Naive thymus-derived CD4-positive, alpha-beta T cell (primary cell): ENCODE measurements at regions of chr1 and their contacts with region 1.

Region 1: DNA sequence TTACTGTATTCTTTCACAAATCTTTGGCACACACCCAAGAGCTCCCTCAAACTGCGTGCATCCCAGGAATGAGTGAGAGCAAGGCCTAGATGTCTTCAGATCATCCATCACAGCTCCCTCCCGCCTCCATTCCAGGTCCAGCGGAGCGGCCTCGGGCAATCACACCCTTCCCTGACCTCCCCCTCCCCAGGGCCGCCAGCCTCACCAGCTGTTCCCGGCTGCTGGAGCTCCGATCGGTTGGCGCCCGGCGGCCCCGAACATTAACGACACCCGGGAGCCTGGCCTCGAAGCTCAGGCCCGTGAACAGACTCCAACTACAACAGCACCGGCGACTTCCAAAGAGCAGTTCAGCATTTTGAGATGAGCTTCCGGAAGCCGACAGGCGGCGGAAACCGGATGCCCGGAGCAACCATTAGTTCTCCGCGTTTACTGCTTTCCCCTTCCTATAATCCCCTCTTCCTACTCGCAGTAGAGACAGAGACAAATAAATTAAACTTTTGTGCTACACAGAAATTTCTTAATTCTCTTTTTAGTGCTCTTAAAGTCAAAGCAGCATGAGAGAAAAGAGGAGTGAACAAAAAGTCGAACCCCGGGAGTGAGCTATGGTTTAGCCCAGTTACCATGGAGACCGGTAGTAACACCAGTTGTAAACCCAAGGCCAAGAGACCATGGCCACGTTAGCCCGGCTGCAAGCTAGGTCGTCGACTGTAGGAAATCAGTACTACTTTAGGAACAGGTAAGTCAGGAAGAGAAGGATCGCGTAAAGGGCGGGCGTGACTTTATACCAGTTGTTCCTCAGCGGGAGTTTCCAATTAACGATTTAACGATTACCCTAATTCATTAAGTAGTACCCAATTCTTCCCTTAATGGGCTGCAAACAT is at the starts of genes GPATCH2 and SPATA17:
- DNase-seq: peak; percentile 52 to 92 (median 87)
- ATAC-seq: peak; percentile 94
- H3K4me3 ChIP-seq: peak within 1 kb of the TSS; percentile 68
- H3K4me3 Mint-ChIP-seq: peak within 1 kb of the TSS; percentile 89 to 99 (median 96)
- H3K27ac ChIP-seq: peak within 1 kb of the TSS; percentile 96
- H3K27ac Mint-ChIP-seq: peak within 1 kb of the TSS; percentile 97 to 100 (median 99)
- H3K4me1 ChIP-seq: peaks cover 6 to 12% of the 10 kb centered on the region in 2 donors
- H3K4me1 Mint-ChIP-seq: peaks cover 17 to 53% (median 43%) of the 10 kb centered on the region in 7 donors
- H3K27me3 ChIP-seq: no peaks in the 10 kb centered on the region
- H3K27me3 Mint-ChIP-seq: peaks cover 0 to 7% (median 3%) of the 10 kb centered on the region in 5 donors
- total RNA-seq, gene GPATCH2: 8.6 to 13.3 (median 11.3) TPM
- total RNA-seq, gene SPATA17: not detected

Region 2: GRCh38 chr1:217029281-217030157 is 601.4 kb before region 1 on chr1:
- CTCF ChIA-PET with region 1: no interaction called
- POLR2A ChIA-PET with region 1: no interaction called
- intact Hi-C with region 1: no loop called
- DNase-seq: no peak
- ATAC-seq: no peak
- H3K4me3 ChIP-seq: no peak overlapping the region
- H3K4me3 Mint-ChIP-seq: no peak overlapping the region
- H3K27ac ChIP-seq: no peak overlapping the region
- H3K27ac Mint-ChIP-seq: no peak overlapping the region
- H3K4me1 ChIP-seq: no peaks in the 10 kb centered on the region
- H3K4me1 Mint-ChIP-seq: peaks cover 0 to 4% (median 0%) of the 10 kb centered on the region in 7 donors
- H3K27me3 ChIP-seq: no peaks in the 10 kb centered on the region
- H3K27me3 Mint-ChIP-seq: no peaks in the 10 kb centered on the region

Region 3: DNA sequence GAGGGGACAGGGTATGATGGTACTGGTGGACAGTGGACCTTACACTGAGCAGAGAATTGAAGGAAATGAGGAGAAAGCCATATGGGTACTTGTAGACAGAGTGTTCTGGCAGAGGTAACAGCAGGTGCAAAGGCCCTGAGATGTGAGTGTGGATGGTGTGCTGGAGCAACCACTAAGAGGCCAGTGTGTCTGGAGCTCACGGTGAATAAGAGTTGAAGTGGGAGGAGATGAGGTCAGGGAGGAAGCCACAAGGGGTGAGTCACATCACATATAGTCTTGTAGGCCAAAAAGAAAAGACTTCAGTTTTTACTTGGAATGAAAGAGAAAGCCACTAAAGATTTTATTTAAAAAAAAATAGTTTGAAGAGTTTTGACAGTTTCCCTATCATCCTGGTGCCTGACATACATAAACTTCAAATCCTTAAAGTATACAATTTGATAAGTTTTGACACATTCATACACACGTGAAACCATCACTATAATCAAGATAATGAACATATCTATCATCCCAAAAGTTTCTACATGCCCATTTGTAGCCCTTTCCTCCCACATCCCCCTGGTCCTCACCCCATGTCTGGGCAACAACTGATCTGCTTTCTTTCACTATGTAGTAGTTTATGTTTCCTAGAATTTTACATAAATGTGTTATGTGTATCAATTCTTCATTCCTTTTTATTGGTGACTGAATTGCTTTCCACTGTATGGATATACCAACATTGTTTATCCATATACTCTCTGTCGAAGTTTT is 148.4 kb before region 1 on chr1:
- CTCF ChIA-PET with region 1: no interaction called
- POLR2A ChIA-PET with region 1: no interaction called
- intact Hi-C with region 1: loop called in 1 of 2 experiments (anchors 2 kb)
- DNase-seq: peak in 1 of 9 donors; percentile 61
- ATAC-seq: peak; percentile 58
- H3K4me3 ChIP-seq: no peak overlapping the region
- H3K4me3 Mint-ChIP-seq: peak overlapping the region in 1 of 10 donors; percentile 4
- H3K27ac ChIP-seq: no peak overlapping the region
- H3K27ac Mint-ChIP-seq: peak overlapping the region in 1 of 9 donors; percentile 50
- H3K4me1 ChIP-seq: no peaks in the 10 kb centered on the region
- H3K4me1 Mint-ChIP-seq: peaks cover 0 to 24% (median 0%) of the 10 kb centered on the region in 7 donors
- H3K27me3 ChIP-seq: no peaks in the 10 kb centered on the region
- H3K27me3 Mint-ChIP-seq: no peaks in the 10 kb centered on the region

Region 4: GRCh38 chr1:217617126-217617525 is 13.8 kb before region 1 on chr1:
- CTCF ChIA-PET with region 1: no interaction called
- POLR2A ChIA-PET with region 1: interaction called, 6 read pairs
- intact Hi-C with region 1: loop called in 1 of 2 experiments (anchors 1 kb)
- DNase-seq: no peak
- ATAC-seq: no peak
- H3K4me3 ChIP-seq: no peak overlapping the region
- H3K4me3 Mint-ChIP-seq: no peak overlapping the region
- H3K27ac ChIP-seq: no peak overlapping the region
- H3K27ac Mint-ChIP-seq: no peak overlapping the region
- H3K4me1 ChIP-seq: peaks cover 0 to 7% of the 10 kb centered on the region in 2 donors
- H3K4me1 Mint-ChIP-seq: peaks cover 14 to 35% (median 20%) of the 10 kb centered on the region in 7 donors
- H3K27me3 ChIP-seq: no peaks in the 10 kb centered on the region
- H3K27me3 Mint-ChIP-seq: no peaks in the 10 kb centered on the region

Region 5: DNA sequence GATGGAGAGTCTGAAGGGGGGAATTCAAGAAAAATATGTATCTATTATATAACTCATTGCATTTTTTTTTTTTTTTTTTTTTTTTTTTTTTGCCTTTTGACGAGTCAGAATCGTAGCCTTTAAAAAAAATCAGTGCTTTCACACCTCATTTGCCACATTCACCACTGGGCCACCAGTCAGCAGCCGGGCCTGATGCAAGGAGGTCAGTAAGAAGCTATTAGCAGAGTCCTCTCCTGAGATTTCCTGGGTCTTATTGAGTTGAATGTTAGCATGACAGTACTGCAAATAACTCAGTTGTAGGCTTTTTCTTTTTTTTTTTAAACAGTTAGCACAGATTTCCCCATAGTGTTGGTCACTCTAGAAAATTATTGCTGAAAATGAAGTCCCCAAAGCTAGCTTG is 140.0 kb after region 1 on chr1:
- CTCF ChIA-PET with region 1: no interaction called
- POLR2A ChIA-PET with region 1: no interaction called
- intact Hi-C with region 1: no loop called
- DNase-seq: no peak
- ATAC-seq: no peak
- H3K4me3 ChIP-seq: no peak overlapping the region
- H3K4me3 Mint-ChIP-seq: no peak overlapping the region
- H3K27ac ChIP-seq: no peak overlapping the region
- H3K27ac Mint-ChIP-seq: no peak overlapping the region
- H3K4me1 ChIP-seq: no peaks in the 10 kb centered on the region
- H3K4me1 Mint-ChIP-seq: no peaks in the 10 kb centered on the region
- H3K27me3 ChIP-seq: no peaks in the 10 kb centered on the region
- H3K27me3 Mint-ChIP-seq: no peaks in the 10 kb centered on the region

Region 6: GRCh38 chr1:217861658-217862057 is 230.7 kb after region 1 on chr1:
- CTCF ChIA-PET with region 1: no interaction called
- POLR2A ChIA-PET with region 1: no interaction called
- intact Hi-C with region 1: no loop called
- DNase-seq: no peak
- ATAC-seq: no peak
- H3K4me3 ChIP-seq: no peak overlapping the region
- H3K4me3 Mint-ChIP-seq: no peak overlapping the region
- H3K27ac ChIP-seq: no peak overlapping the region
- H3K27ac Mint-ChIP-seq: no peak overlapping the region
- H3K4me1 ChIP-seq: no peaks in the 10 kb centered on the region
- H3K4me1 Mint-ChIP-seq: no peaks in the 10 kb centered on the region
- H3K27me3 ChIP-seq: no peaks in the 10 kb centered on the region
- H3K27me3 Mint-ChIP-seq: no peaks in the 10 kb centered on the region